IMR-90 (cell line): ENCODE measurements at regions of chr7 and their contacts with region 1.

Region 1: DNA sequence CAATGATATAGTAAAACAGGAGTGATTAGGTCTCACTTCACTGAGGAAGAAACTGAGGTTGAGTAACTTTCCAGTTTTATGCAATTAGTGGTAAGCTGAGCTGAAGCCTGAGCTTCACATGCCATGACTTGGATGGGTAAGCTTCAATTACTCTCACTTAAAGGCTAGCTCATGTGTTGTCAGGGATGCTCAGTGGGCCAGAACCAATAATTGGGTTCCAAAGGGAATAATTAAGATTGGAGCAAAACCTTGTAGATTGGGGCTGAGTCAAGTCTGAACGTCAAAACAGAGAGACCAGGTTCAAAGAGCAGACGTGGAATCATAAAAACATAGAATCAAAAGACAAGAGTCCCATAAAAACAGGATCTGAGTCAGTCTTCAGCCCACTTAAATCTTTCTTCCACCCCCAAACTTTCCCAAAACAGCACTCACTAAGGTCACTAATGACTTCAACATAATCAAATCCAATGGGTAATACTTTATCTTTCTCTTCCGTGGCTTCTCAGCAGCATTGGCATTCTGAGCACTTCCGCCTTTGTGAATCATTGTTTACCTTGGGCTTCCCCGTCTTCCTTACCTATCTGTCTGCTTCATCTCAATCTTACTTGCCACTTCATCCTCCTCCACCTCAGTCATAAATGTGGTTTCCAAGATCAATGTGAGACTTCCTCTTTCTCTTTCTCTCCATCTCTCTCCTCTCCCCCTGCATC is 23.0 kb upstream of the EGFR start:
- DNase-seq: peak; percentile 91
- ATAC-seq: peak; percentile 60
- H3K4me3 ChIP-seq: no peak overlapping the region
- H3K27ac ChIP-seq: no peak overlapping the region; the same call in 1 of the 2 replicates
- H3K4me1 ChIP-seq: peaks cover 13% of the 10 kb centered on the region
- H3K27me3 ChIP-seq: no peaks in the 10 kb centered on the region
- CTCF ChIP-seq: no peak
- POLR2A ChIP-seq: no peak
- RAD21 ChIP-seq: no peak

Region 2: DNA sequence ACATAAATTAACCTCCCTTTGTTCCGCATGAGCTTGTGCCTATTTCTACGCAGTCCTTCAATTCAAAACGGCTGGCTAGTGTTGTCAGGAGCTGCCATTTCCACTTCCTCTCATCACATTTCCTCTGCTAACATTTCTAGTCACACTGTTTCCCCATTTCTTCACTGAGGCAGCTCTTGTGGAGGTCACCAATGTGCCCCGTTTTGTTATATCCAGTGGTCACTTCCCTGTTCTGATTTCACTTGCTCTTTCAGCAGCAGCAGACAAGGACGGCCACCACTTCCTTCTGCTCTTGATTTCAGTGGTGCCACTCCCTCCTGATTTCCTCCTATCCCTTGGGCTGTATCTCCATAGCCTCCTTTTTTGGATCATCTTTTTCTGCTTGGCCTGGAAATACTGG is 172.0 kb before region 1 on chr7:
- CTCF ChIA-PET with region 1: no interaction called
- POLR2A ChIA-PET with region 1: no interaction called
- dilution Hi-C with region 1: no loop called
- in situ Hi-C with region 1: no loop called
- intact Hi-C with region 1: no loop called
- DNase-seq: no peak
- ATAC-seq: no peak
- H3K4me3 ChIP-seq: no peak overlapping the region
- H3K27ac ChIP-seq: no peak overlapping the region
- H3K4me1 ChIP-seq: peaks cover 3% of the 10 kb centered on the region
- H3K27me3 ChIP-seq: no peaks in the 10 kb centered on the region
- CTCF ChIP-seq: no peak
- POLR2A ChIP-seq: no peak
- RAD21 ChIP-seq: no peak

Region 3: GRCh38 chr7:54960517-54960916 is 35.3 kb before region 1 on chr7:
- CTCF ChIA-PET with region 1: no interaction called
- POLR2A ChIA-PET with region 1: no interaction called
- dilution Hi-C with region 1: loop called (anchors 5 kb)
- in situ Hi-C with region 1: no loop called
- intact Hi-C with region 1: no loop called
- DNase-seq: peak; percentile 61
- ATAC-seq: peak; percentile 29; the same call in 1 of the 2 replicates
- H3K4me3 ChIP-seq: no peak overlapping the region
- H3K27ac ChIP-seq: no peak overlapping the region
- H3K4me1 ChIP-seq: no peaks in the 10 kb centered on the region
- H3K27me3 ChIP-seq: no peaks in the 10 kb centered on the region; the same call in 1 of the 2 replicates
- CTCF ChIP-seq: no peak
- POLR2A ChIP-seq: no peak
- RAD21 ChIP-seq: no peak